ENCODE measurements at regions of chr2 and their contacts with region 1.

Region 1: GRCh38 chr2:55718165-55719008 is 24.7 kb upstream of the PNPT1 start:
- DNase-seq: peak; percentile 58 to 71
- ATAC-seq: peak; percentile 74 to 92; a peak in 5 of 6 replicates
- H3K4me3 ChIP-seq: no peak overlapping the region
- H3K27ac ChIP-seq: peak overlapping the region in 1 of 2 experiments; percentile 41; a peak in 3 of 6 replicates
- H3K4me1 ChIP-seq: 0 out of 3 replicates have a peak, but pooled peaks cover 2% of the 10 kb centered on the region
- CTCF ChIP-seq: peak; percentile 99
- EP300 ChIP-seq: no peak
- POLR2A ChIP-seq: no peak
- RAD21 ChIP-seq: peak; percentile 98

Region 2: DNA sequence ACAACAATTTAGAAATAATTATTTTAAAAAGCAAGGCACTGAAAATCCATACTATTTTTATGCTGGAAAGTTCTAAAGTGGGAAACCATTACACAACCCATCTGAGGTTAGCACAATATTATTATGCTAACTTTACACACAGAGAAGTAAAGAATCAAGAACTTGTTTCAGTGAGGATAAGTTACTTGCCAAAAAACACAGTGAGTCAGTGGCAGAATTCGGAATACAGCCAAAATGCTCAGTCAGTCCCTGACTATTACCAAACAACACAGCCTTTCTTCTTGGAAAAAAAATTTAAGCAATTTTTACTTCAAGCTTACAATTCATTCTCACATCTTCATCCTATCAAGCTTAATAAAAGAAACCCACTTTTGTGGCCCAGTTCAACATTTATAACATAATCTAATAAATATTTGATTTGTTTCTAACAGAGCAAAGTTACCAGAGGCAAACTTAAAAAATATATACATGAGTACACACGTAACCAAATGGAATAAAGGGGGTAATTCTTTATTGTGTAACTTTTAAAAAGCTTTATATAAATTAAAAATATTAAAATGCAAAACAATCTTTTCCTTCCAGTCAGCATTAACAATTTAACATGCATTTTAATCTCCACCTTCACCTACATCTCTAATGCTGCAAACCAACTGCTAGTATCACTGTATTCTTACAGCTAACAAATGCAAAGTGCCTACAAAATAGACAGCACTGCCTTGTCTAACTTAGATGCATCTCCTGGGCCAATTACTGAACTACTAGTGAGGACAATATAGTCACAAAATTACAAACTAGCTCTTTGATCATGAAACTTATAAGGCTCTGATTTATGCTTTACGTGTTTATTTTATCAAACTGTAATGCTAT is 354.0 kb before region 1 on chr2:
- CTCF ChIA-PET with region 1: no interaction called
- POLR2A ChIA-PET with region 1: no interaction called
- DNase-seq: peak; percentile 23 to 57
- ATAC-seq: peak; percentile 71 to 81; a peak in 5 of 6 replicates
- H3K4me3 ChIP-seq: no peak overlapping the region
- H3K27ac ChIP-seq: no peak overlapping the region
- H3K4me1 ChIP-seq: peaks cover 16% of the 10 kb centered on the region
- CTCF ChIP-seq: no peak
- EP300 ChIP-seq: no peak
- POLR2A ChIP-seq: no peak
- RAD21 ChIP-seq: no peak

Region 3: GRCh38 chr2:55460562-55460961 is 257.8 kb before region 1 on chr2:
- CTCF ChIA-PET with region 1: no interaction called
- POLR2A ChIA-PET with region 1: no interaction called
- DNase-seq: no peak
- ATAC-seq: peak; percentile 34 to 42; a peak in 3 of 6 replicates
- H3K4me3 ChIP-seq: no peak overlapping the region
- H3K27ac ChIP-seq: no peak overlapping the region
- H3K4me1 ChIP-seq: no peaks in the 10 kb centered on the region
- CTCF ChIP-seq: no peak
- EP300 ChIP-seq: no peak
- POLR2A ChIP-seq: no peak
- RAD21 ChIP-seq: no peak

Region 4: GRCh38 chr2:55565613-55566012 is 152.8 kb before region 1 on chr2:
- CTCF ChIA-PET with region 1: no interaction called
- POLR2A ChIA-PET with region 1: no interaction called
- DNase-seq: no peak
- ATAC-seq: no peak
- H3K4me3 ChIP-seq: no peak overlapping the region
- H3K27ac ChIP-seq: no peak overlapping the region
- H3K4me1 ChIP-seq: no peaks in the 10 kb centered on the region
- CTCF ChIP-seq: no peak
- EP300 ChIP-seq: no peak
- POLR2A ChIP-seq: no peak
- RAD21 ChIP-seq: no peak

Region 5: GRCh38 chr2:55618275-55619055 is 99.9 kb before region 1 on chr2:
- CTCF ChIA-PET with region 1: no interaction called
- POLR2A ChIA-PET with region 1: no interaction called
- DNase-seq: peak; percentile 69 to 81
- ATAC-seq: peak; percentile 57 to 62
- H3K4me3 ChIP-seq: peak overlapping the region; percentile 69
- H3K27ac ChIP-seq: peak overlapping the region; percentile 78 to 87
- H3K4me1 ChIP-seq: peaks cover 25% of the 10 kb centered on the region
- CTCF ChIP-seq: no peak
- EP300 ChIP-seq: no peak
- POLR2A ChIP-seq: peak; percentile 25; the same call in 1 of the 2 replicates
- RAD21 ChIP-seq: no peak

Region 6: GRCh38 chr2:55751966-55752365 is 33.6 kb after region 1 on chr2:
- CTCF ChIA-PET with region 1: interaction called, 12 read pairs
- POLR2A ChIA-PET with region 1: no interaction called
- DNase-seq: no peak
- ATAC-seq: no peak
- H3K4me3 ChIP-seq: no peak overlapping the region
- H3K27ac ChIP-seq: no peak overlapping the region
- H3K4me1 ChIP-seq: no peaks in the 10 kb centered on the region
- CTCF ChIP-seq: no peak
- EP300 ChIP-seq: no peak
- POLR2A ChIP-seq: no peak
- RAD21 ChIP-seq: no peak

Region 7: GRCh38 chr2:55961318-55961911 is 243.0 kb after region 1 on chr2:
- CTCF ChIA-PET with region 1: interaction called, 45 read pairs
- POLR2A ChIA-PET with region 1: no interaction called
- DNase-seq: peak; percentile 43 to 76
- ATAC-seq: peak; percentile 74 to 75; a peak in 5 of 6 replicates
- H3K4me3 ChIP-seq: no peak overlapping the region
- H3K27ac ChIP-seq: peak overlapping the region; percentile 43 to 67; a peak in 5 of 6 replicates
- H3K4me1 ChIP-seq: peaks cover 29% of the 10 kb centered on the region
- CTCF ChIP-seq: peak; percentile 97
- EP300 ChIP-seq: no peak
- POLR2A ChIP-seq: no peak
- RAD21 ChIP-seq: peak; percentile 93 to 95

Region 8: GRCh38 chr2:56018224-56018623 is 299.8 kb after region 1 on chr2:
- CTCF ChIA-PET with region 1: interaction called, 42 read pairs
- POLR2A ChIA-PET with region 1: interaction called, 4 read pairs
- DNase-seq: no peak
- ATAC-seq: no peak
- H3K4me3 ChIP-seq: no peak overlapping the region
- H3K27ac ChIP-seq: no peak overlapping the region
- H3K4me1 ChIP-seq: no peaks in the 10 kb centered on the region; the same call in 2 of the 3 replicates
- CTCF ChIP-seq: no peak
- EP300 ChIP-seq: no peak
- POLR2A ChIP-seq: no peak
- RAD21 ChIP-seq: no peak

Region 9: DNA sequence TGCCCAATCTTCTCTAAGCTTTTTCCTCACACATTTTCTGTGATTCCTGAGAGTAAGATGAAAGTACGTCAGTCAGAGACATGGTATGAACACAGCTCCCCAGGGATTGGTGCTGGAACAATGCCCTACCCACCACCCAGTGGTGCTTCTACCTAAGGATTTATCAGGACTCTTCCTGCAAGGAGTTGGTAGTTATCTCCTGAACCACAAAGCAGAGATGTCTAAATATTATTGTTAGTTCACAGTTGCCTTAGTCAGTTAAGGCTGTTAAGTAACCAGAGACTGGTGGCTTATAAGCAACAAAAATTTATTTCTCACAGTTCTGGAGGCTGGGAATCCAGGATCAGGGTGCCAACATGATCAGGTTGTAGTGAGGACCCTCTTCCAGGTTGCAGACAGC is 405.2 kb after region 1 on chr2:
- CTCF ChIA-PET with region 1: interaction called, 48 read pairs
- POLR2A ChIA-PET with region 1: no interaction called
- DNase-seq: no peak
- ATAC-seq: no peak
- H3K4me3 ChIP-seq: no peak overlapping the region
- H3K27ac ChIP-seq: no peak overlapping the region
- H3K4me1 ChIP-seq: no peaks in the 10 kb centered on the region
- CTCF ChIP-seq: no peak
- EP300 ChIP-seq: no peak
- POLR2A ChIP-seq: no peak
- RAD21 ChIP-seq: no peak

Measured in A549 (cell line).